Activated B cell treated with CpG ODN at 0.5 μM for 24 hours (primary cell): ENCODE measurements at regions of chr20 and their contacts with region 1.

Region 1: GRCh38 chr20:64038565-64039292 is 2.7 kb downstream of the C20orf204 start:
- DNase-seq: peak; percentile 81
- ATAC-seq: peak; percentile 89
- H3K4me3 Mint-ChIP-seq: peak overlapping the region; percentile 73
- H3K27ac Mint-ChIP-seq: no peak overlapping the region
- H3K4me1 Mint-ChIP-seq: peaks cover 17% of the 10 kb centered on the region
- H3K27me3 Mint-ChIP-seq: peaks cover 9% of the 10 kb centered on the region
- CTCF ChIP-seq: peak; percentile 17

Region 2: DNA sequence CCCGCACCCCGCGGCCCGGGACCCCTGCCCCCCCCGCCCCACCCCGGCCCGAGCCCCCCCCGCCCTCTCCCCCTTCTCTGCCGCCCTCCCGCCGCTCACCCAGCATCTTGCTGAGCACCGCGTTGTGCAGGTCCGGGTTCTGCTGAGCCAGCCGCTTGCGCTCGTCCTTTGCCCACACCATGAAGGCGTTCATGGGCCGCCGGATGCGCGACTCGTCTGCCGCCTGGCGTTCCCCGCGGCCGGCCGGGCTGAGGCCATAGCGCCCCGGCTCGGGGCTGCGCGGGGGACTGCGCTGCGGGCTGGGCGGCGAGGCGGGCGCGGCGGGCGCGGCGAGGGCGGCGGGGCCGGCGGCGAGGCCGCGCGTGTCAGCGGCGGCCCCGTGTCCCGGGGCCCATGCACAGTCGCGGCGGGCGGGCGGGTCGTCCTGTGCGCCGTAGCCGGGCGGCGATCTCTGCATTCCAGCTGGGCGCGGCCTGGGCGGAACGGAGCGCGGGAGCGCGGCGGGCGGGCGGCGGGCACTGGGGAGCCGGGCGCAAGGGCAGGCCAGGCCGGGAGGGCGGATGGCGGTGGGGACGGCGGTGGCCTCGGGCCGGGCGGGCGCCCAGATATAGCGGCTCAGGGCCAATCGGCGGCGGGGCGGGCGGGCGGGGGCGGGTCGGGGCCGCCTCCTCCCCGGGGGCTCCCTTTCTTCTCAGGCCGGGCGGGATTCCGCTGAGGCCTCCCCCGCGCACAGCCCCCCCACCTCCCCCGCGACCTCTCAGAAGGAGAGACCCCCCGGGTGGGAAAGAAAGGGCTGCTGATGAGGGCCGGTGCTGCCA is 10.5 kb after region 1 on chr20 and contains the start of gene SOX18:
- CTCF ChIA-PET with region 1: interaction called, 3 read pairs
- POLR2A ChIA-PET with region 1: interaction called, 10 read pairs
- intact Hi-C with region 1: no loop called
- DNase-seq: no peak
- ATAC-seq: peak; percentile 62
- H3K4me3 Mint-ChIP-seq: peak within 1 kb of the TSS; percentile 35
- H3K27ac Mint-ChIP-seq: no peak within 1 kb of the TSS
- H3K4me1 Mint-ChIP-seq: peaks cover 6% of the 10 kb centered on the region
- H3K27me3 Mint-ChIP-seq: peaks cover 38% of the 10 kb centered on the region
- CTCF ChIP-seq: no peak
- total RNA-seq, gene SOX18: not detected in 2 replicates

Region 3: DNA sequence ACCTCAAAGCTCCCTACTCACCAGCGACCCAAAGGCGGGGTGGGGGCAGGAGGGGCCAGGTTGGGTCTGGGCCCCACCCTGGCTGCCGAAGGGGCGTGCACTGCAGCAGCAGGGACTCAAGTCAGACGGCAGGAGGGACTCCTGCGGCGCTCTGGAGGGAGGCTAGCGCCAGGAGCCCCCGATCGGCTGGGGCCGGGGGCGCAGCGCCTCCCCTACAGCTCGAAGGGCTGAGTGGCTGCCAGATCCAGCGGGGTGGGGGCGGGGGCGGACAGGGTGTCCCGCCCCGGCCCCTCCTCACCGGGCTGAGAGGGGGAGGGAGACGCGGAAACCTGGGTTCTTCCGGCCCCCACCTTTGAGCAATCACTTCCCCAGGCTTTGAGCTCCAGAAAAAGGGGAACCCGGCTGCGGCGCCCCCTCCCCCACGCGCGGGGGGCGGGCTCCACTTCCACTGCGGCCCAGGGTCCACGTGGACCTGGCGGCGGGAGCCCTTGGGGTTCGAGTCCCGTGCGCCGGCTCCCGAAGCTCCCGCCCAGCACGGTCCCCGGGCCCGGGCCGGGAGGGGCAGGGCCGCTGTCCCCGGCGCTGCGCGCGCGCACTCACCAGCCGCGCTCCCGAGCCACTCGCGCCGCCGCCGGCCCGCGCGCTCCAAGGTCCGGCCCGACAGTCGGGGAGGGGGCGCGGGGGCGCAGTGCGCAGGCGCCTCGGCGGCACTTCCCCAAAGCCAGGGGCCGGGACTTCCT is 40.7 kb after region 1 on chr20 and contains the start of gene RGS19:
- CTCF ChIA-PET with region 1: interaction called, 13 read pairs
- POLR2A ChIA-PET with region 1: interaction called, 8 read pairs
- intact Hi-C with region 1: loop called (anchors 1 kb)
- DNase-seq: peak; percentile 86
- ATAC-seq: peak; percentile 49
- H3K4me3 Mint-ChIP-seq: peak within 1 kb of the TSS; percentile 87
- H3K27ac Mint-ChIP-seq: peak within 1 kb of the TSS; percentile 89
- H3K4me1 Mint-ChIP-seq: peaks cover 68% of the 10 kb centered on the region
- H3K27me3 Mint-ChIP-seq: peaks cover 3% of the 10 kb centered on the region
- CTCF ChIP-seq: no peak
- total RNA-seq, gene RGS19: 45.0 and 53.4 TPM in 2 replicates

Region 4: GRCh38 chr20:64119681-64120341 is 81.1 kb after region 1 on chr20:
- CTCF ChIA-PET with region 1: interaction called, 57 read pairs
- POLR2A ChIA-PET with region 1: interaction called, 9 read pairs
- intact Hi-C with region 1: loop called (anchors 1 kb)
- DNase-seq: no peak
- ATAC-seq: peak; percentile 5
- H3K4me3 Mint-ChIP-seq: peak overlapping the region; percentile 71
- H3K27ac Mint-ChIP-seq: peak overlapping the region; percentile 78
- H3K4me1 Mint-ChIP-seq: peaks cover 8% of the 10 kb centered on the region
- H3K27me3 Mint-ChIP-seq: peaks cover 5% of the 10 kb centered on the region
- CTCF ChIP-seq: no peak

Region 5: GRCh38 chr20:64133951-64134407 is 95.2 kb after region 1 on chr20:
- CTCF ChIA-PET with region 1: no interaction called
- POLR2A ChIA-PET with region 1: no interaction called
- intact Hi-C with region 1: no loop called
- DNase-seq: no peak
- ATAC-seq: no peak
- H3K4me3 Mint-ChIP-seq: no peak overlapping the region
- H3K27ac Mint-ChIP-seq: no peak overlapping the region
- H3K4me1 Mint-ChIP-seq: no peaks in the 10 kb centered on the region
- H3K27me3 Mint-ChIP-seq: peaks cover 3% of the 10 kb centered on the region
- CTCF ChIP-seq: no peak